SK-N-SH (cell line): ENCODE measurements at regions of chr5 and their contacts with region 1.

Region 1: GRCh38 chr5:55146543-55147151 is 13.3 kb upstream of the GPX8 start:
- DNase-seq: peak; percentile 60
- H3K4me3 ChIP-seq: no peak overlapping the region; a peak in 1 of 4 replicates
- H3K27ac ChIP-seq: no peak overlapping the region
- H3K4me1 ChIP-seq: no peaks in the 10 kb centered on the region
- H3K27me3 ChIP-seq: peaks cover 6% of the 10 kb centered on the region; the same call in 1 of the 2 replicates
- CTCF ChIP-seq: peak; percentile 95
- EP300 ChIP-seq: no peak
- RAD21 ChIP-seq: peak; percentile 88

Region 2: DNA sequence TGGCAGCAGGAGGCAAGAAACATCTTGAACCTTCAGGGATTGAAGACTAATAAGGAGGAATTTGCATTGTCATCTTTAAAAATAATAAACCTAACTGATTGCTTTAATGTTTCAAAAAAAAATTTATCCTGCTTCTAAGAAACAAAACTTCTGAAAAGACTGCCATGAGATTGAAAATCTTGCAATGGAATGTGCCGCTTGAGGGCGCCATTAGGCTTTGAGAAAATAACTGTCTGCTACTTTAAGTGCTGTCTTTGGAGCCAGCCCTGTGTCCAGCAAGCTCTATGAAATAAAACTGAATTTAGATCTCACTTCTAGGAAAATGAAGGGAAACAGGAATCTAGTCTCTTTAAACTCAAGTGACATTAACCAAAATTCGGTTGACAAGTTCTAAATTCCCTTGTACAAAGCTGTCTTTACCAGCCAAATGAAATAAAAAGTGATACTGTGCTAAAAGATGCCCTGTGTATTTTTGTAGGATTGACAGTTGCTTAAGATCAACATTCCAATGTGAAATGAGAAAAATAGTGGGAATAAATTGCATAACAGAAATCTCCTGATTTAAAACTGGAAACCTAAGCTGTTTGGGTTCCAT is 240.6 kb before region 1 on chr5:
- CTCF ChIA-PET with region 1: interaction called, 15 read pairs
- POLR2A ChIA-PET with region 1: no interaction called
- DNase-seq: peak; percentile 38
- H3K4me3 ChIP-seq: no peak overlapping the region
- H3K27ac ChIP-seq: no peak overlapping the region
- H3K4me1 ChIP-seq: 0 out of 4 replicates have a peak, but pooled peaks cover 0 to 4% of the 10 kb centered on the region in 2 experiments
- H3K27me3 ChIP-seq: no peaks in the 10 kb centered on the region; the same call in 1 of the 2 replicates
- CTCF ChIP-seq: peak; percentile 93
- EP300 ChIP-seq: no peak
- RAD21 ChIP-seq: peak; percentile 75

Region 3: GRCh38 chr5:55159763-55160492 is 13.3 kb after region 1 on chr5 and contains the start of gene GPX8:
- CTCF ChIA-PET with region 1: interaction called, 11 read pairs
- POLR2A ChIA-PET with region 1: no interaction called
- DNase-seq: peak; percentile 26
- H3K4me3 ChIP-seq: peak within 1 kb of the TSS; percentile 60 to 94; a peak in 3 of 4 replicates
- H3K27ac ChIP-seq: peak within 1 kb of the TSS; percentile 80 to 93
- H3K4me1 ChIP-seq: peaks cover 0 to 11% of the 10 kb centered on the region in 2 experiments; a peak in 1 of 4 replicates
- H3K27me3 ChIP-seq: no peaks in the 10 kb centered on the region
- CTCF ChIP-seq: peak; percentile 92
- EP300 ChIP-seq: no peak
- RAD21 ChIP-seq: peak; percentile 66
- polyA plus RNA-seq, gene GPX8: 30.1 and 44.2 TPM in 2 replicates

Region 4: GRCh38 chr5:55191165-55191564 is 44.5 kb after region 1 on chr5:
- CTCF ChIA-PET with region 1: no interaction called
- POLR2A ChIA-PET with region 1: no interaction called
- DNase-seq: no peak
- H3K4me3 ChIP-seq: no peak overlapping the region
- H3K27ac ChIP-seq: no peak overlapping the region
- H3K4me1 ChIP-seq: no peaks in the 10 kb centered on the region
- H3K27me3 ChIP-seq: peaks cover 38% of the 10 kb centered on the region
- CTCF ChIP-seq: no peak
- EP300 ChIP-seq: no peak
- RAD21 ChIP-seq: no peak